ENCODE measurements at regions of chr1 and their contacts with region 1.

Region 1: GRCh38 chr1:206905280-206906164 is 8.3 kb downstream of the IL24 start:
- DNase-seq: peak; percentile 76
- ATAC-seq: peak; percentile 93
- H3K4me3 Mint-ChIP-seq: peak overlapping the region; percentile 27
- H3K27ac Mint-ChIP-seq: peak overlapping the region; percentile 87
- H3K4me1 Mint-ChIP-seq: peaks cover 86% of the 10 kb centered on the region
- H3K27me3 Mint-ChIP-seq: no peaks in the 10 kb centered on the region

Region 2: DNA sequence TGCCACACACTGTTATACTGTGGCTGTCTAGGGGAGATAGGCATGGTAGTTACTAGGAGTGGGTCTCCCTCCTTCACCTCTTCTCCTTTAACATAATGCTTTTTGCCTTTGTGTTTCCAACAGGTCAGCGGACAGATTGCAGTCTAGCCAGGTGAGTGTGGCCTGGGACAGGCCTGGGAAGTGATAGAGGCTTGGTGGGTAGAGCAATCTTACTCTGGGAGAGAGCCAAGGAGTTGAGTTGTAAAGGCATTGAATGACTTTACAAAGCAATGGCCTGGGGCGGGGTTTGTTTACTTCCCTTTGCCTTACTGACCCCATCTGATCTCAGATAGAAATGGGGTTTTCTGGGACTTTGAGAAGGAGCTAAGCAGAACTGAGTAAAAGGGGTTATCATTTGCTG is 486.3 kb before region 1 on chr1:
- CTCF ChIA-PET with region 1: no interaction called
- POLR2A ChIA-PET with region 1: no interaction called
- intact Hi-C with region 1: no loop called
- DNase-seq: no peak
- ATAC-seq: no peak
- H3K4me3 Mint-ChIP-seq: no peak overlapping the region
- H3K27ac Mint-ChIP-seq: no peak overlapping the region
- H3K4me1 Mint-ChIP-seq: no peaks in the 10 kb centered on the region
- H3K27me3 Mint-ChIP-seq: no peaks in the 10 kb centered on the region

Region 3: DNA sequence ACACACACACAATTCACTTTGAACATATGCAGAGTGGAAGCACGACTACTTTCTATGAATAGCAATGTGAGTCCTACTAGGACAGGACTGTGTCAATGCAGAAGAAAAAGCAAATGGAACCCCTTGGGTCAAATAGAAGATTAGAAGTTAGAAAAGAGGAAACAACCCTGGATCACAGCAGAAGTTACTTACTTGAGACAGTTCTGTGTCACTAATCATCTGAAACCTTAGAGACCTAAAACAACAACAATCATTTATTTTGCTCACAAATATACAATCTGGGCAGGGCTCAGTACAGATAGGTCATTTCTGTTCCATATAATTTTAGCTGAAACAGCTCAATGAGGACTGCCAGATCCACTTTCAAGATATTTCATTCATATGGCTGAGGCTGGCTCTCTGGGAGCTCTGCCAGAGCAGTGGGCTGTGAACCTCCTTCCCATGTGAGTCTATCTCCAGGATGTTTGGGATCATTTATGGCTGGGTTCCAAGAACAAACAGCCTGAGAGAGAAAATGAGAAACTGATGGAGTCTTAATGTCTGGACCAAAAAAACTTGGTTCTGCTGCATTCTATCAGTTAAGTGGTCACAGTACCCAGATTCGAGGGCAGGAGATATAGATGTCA is 90.7 kb before region 1 on chr1:
- CTCF ChIA-PET with region 1: interaction called, 18 read pairs
- POLR2A ChIA-PET with region 1: interaction called, 5 read pairs
- intact Hi-C with region 1: loop called (anchors 2 kb)
- DNase-seq: no peak
- ATAC-seq: no peak
- H3K4me3 Mint-ChIP-seq: no peak overlapping the region
- H3K27ac Mint-ChIP-seq: no peak overlapping the region
- H3K4me1 Mint-ChIP-seq: peaks cover 26% of the 10 kb centered on the region
- H3K27me3 Mint-ChIP-seq: peaks cover 2% of the 10 kb centered on the region

Region 4: GRCh38 chr1:206925106-206925736 is 19.7 kb after region 1 on chr1:
- CTCF ChIA-PET with region 1: interaction called, 18 read pairs
- POLR2A ChIA-PET with region 1: interaction called, 3 read pairs
- intact Hi-C with region 1: no loop called
- DNase-seq: peak; percentile 83
- ATAC-seq: peak; percentile 58
- H3K4me3 Mint-ChIP-seq: no peak overlapping the region
- H3K27ac Mint-ChIP-seq: no peak overlapping the region
- H3K4me1 Mint-ChIP-seq: peaks cover 28% of the 10 kb centered on the region
- H3K27me3 Mint-ChIP-seq: no peaks in the 10 kb centered on the region

Region 5: DNA sequence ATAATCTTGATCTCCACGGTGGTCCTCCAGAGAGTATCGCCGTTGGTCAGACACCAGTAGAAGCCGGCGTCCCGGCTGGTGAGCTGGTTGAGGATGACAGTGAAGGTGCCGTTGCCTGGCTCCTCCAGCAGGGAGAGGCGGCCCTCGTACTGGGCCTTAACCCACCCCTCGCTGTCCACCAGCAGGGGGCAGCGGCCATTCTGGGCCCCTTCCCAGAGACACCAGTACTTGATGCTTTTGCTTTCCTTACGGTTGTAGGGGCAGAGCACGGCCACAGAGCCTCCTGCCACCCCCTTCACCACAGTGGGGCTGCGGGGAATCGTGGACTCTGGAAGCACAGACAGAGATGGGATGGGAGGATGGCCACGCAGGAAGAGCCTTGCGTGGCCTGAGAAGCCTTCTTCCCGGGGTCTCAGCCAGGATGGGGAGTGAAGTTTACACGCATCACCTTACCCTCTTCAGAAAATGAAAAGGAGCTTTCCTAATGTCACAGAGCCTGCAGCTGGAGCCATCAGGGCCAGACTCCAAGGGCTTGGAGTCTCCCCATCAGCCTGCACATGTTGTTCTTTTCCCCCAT is 30.1 kb after region 1 on chr1:
- CTCF ChIA-PET with region 1: interaction called, 16 read pairs
- POLR2A ChIA-PET with region 1: no interaction called
- intact Hi-C with region 1: no loop called
- DNase-seq: peak; percentile 79
- ATAC-seq: peak; percentile 76
- H3K4me3 Mint-ChIP-seq: no peak overlapping the region
- H3K27ac Mint-ChIP-seq: no peak overlapping the region
- H3K4me1 Mint-ChIP-seq: peaks cover 23% of the 10 kb centered on the region
- H3K27me3 Mint-ChIP-seq: no peaks in the 10 kb centered on the region

Region 6: GRCh38 chr1:207040181-207040533 is 134.6 kb after region 1 on chr1:
- CTCF ChIA-PET with region 1: no interaction called
- POLR2A ChIA-PET with region 1: no interaction called
- intact Hi-C with region 1: no loop called
- DNase-seq: no peak
- ATAC-seq: no peak
- H3K4me3 Mint-ChIP-seq: no peak overlapping the region
- H3K27ac Mint-ChIP-seq: no peak overlapping the region
- H3K4me1 Mint-ChIP-seq: peaks cover 16% of the 10 kb centered on the region
- H3K27me3 Mint-ChIP-seq: no peaks in the 10 kb centered on the region